ENCODE measurements at regions of chr2 and their contacts with region 1.

Region 1: DNA sequence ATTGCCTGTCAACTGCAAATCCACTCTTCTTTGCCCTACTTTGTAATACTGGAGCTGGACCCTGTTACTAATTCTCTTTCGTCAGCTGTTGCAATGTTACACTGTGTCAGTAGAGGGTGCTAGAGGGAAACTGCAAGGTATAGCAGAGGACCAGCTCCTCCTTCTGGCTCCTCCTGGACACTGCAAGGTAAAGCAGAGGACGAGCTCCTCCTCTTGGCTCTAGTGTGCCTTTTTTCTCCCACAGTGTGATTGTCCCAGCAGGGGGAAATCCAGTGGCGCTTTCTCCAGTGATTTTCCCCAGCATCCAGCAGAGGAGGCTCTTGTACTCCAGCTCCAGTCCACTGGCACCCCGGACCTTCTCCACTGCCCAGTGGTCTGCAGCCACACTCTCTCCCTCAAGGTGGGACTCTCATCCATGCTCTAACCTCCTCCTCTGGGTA is 95.6 kb downstream of the CAPN13 start:
- DNase-seq: peak; percentile 95
- ATAC-seq: peak; percentile 69
- H3K4me3 ChIP-seq: no peak overlapping the region
- H3K27ac ChIP-seq: no peak overlapping the region
- H3K4me1 ChIP-seq: no peaks in the 10 kb centered on the region; the same call in 1 of the 2 replicates
- H3K27me3 ChIP-seq: no peaks in the 10 kb centered on the region
- CTCF ChIP-seq: peak; percentile 99

Region 2: GRCh38 chr2:30098266-30099005 is 613.2 kb before region 1 on chr2:
- CTCF ChIA-PET with region 1: no interaction called
- POLR2A ChIA-PET with region 1: no interaction called
- intact Hi-C with region 1: loop called (anchors 5 kb)
- DNase-seq: no peak
- ATAC-seq: no peak
- H3K4me3 ChIP-seq: no peak overlapping the region
- H3K27ac ChIP-seq: no peak overlapping the region
- H3K4me1 ChIP-seq: no peaks in the 10 kb centered on the region
- H3K27me3 ChIP-seq: 0 out of 2 replicates have a peak, but pooled peaks cover 8% of the 10 kb centered on the region
- CTCF ChIP-seq: no peak

Region 3: DNA sequence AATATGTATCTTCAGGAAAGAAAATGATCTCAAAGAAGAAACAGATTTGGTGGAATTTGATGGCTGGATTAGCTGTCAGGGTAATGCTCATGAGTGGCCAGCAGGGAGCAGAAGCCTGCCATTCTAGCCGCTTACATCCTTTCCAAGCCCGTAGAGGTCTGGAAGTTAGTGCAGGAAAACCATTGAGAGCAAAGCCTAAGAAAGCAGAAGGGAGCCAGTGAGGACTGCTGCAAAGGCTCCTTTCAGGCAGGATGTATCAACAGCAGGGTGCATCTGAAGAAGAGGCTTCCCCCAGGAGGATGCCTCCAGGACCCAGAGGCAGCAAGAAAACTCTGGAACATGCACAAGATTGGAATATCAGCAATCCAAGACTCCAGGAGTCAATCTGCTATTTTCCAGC is 503.2 kb before region 1 on chr2:
- CTCF ChIA-PET with region 1: interaction called, 23 read pairs
- POLR2A ChIA-PET with region 1: no interaction called
- intact Hi-C with region 1: loop called (anchors 1 kb)
- DNase-seq: peak; percentile 76
- ATAC-seq: peak; percentile 87
- H3K4me3 ChIP-seq: no peak overlapping the region
- H3K27ac ChIP-seq: no peak overlapping the region
- H3K4me1 ChIP-seq: no peaks in the 10 kb centered on the region
- H3K27me3 ChIP-seq: peaks cover 26% of the 10 kb centered on the region; the same call in 1 of the 2 replicates
- CTCF ChIP-seq: peak; percentile 93

Region 4: GRCh38 chr2:30569946-30570345 is 141.7 kb before region 1 on chr2:
- CTCF ChIA-PET with region 1: no interaction called
- POLR2A ChIA-PET with region 1: no interaction called
- intact Hi-C with region 1: loop called (anchors 10 kb)
- DNase-seq: no peak
- ATAC-seq: no peak
- H3K4me3 ChIP-seq: no peak overlapping the region
- H3K27ac ChIP-seq: no peak overlapping the region
- H3K4me1 ChIP-seq: no peaks in the 10 kb centered on the region
- H3K27me3 ChIP-seq: no peaks in the 10 kb centered on the region
- CTCF ChIP-seq: no peak

Region 5: GRCh38 chr2:30862054-30862651 is 150.5 kb after region 1 on chr2:
- CTCF ChIA-PET with region 1: interaction called, 3 read pairs
- POLR2A ChIA-PET with region 1: no interaction called
- intact Hi-C with region 1: loop called (anchors 2 kb)
- DNase-seq: peak; percentile 84
- ATAC-seq: peak; percentile 46
- H3K4me3 ChIP-seq: no peak overlapping the region
- H3K27ac ChIP-seq: no peak overlapping the region
- H3K4me1 ChIP-seq: no peaks in the 10 kb centered on the region
- H3K27me3 ChIP-seq: no peaks in the 10 kb centered on the region
- CTCF ChIP-seq: peak; percentile 69

Region 6: DNA sequence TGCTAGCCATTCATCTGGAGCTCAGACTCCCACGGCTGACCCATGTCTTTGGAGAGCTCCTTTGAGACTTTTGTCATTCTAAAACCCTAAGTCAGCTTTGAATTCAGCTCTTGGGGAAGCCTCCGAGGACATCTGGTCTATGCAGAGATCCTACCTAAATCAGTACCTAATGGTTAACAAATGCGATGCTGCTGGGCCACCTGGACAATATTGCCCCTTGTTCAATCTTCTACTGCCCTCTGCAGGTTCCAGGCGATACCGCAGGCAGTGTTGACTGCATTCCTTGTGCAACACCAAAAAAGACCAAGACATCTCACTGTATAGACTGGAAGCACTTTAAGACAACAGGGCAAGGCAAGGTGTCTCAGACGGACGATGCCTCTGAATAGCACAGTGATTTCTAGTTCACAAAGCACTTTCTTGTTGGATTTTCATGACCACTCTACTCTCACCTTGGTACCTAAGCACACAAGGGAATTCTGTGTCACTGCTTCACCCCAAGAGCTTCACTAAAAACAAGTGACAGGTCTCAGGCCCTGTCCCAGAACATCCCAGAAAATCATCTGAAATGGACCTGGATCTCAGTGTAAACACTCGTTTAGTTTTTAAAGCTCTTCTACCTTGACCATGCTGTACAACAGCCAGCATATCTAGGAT is 622.0 kb after region 1 on chr2:
- CTCF ChIA-PET with region 1: interaction called, 7 read pairs
- POLR2A ChIA-PET with region 1: no interaction called
- intact Hi-C with region 1: loop called (anchors 1 kb)
- DNase-seq: peak; percentile 94
- ATAC-seq: peak; percentile 62
- H3K4me3 ChIP-seq: no peak overlapping the region
- H3K27ac ChIP-seq: peak overlapping the region; percentile 95
- H3K4me1 ChIP-seq: peaks cover 44% of the 10 kb centered on the region
- H3K27me3 ChIP-seq: no peaks in the 10 kb centered on the region
- CTCF ChIP-seq: peak; percentile 97